Activated CD4-positive, alpha-beta T cell treated with anti-CD3 and anti-CD28 coated beads for 36 hours (primary cell): ENCODE measurements at regions of chr1 and their contacts with region 1.

Region 1: GRCh38 chr1:89198491-89199072 is at the start of gene GBP4:
- DNase-seq: peak; percentile 63
- ATAC-seq: peak; percentile 67
- H3K4me3 Mint-ChIP-seq: peak within 1 kb of the TSS; percentile 83
- H3K27ac Mint-ChIP-seq: peak within 1 kb of the TSS; percentile 98
- H3K4me1 Mint-ChIP-seq: peaks cover 73% of the 10 kb centered on the region
- H3K27me3 Mint-ChIP-seq: no peaks in the 10 kb centered on the region
- total RNA-seq, gene GBP4: 30.8 to 34.4 TPM

Region 2: DNA sequence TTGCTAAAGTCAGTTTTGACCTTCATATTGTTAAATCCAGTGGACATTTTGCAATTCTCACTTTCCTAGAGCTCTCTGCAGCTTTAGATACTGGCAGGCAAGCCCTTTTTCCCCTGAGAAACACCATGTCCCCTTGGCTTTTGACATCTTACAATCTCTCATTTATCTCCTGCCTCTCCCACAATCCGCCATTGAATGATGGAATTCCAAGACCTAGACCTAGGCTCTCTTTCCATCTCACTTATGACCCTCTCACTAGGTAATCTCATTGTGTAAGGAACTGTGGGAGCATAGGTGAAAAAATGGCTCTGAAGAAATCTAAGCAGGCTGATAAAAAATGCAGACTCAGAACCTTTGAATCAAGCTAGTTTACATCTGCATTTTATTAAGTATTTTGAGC is 208.2 kb before region 1 on chr1:
- CTCF ChIA-PET with region 1: no interaction called
- POLR2A ChIA-PET with region 1: no interaction called
- intact Hi-C with region 1: loop called in 1 of 2 experiments (anchors 1 kb)
- DNase-seq: no peak
- ATAC-seq: no peak
- H3K4me3 Mint-ChIP-seq: peak overlapping the region; percentile 41
- H3K27ac Mint-ChIP-seq: peak overlapping the region; percentile 48
- H3K4me1 Mint-ChIP-seq: peaks cover 50% of the 10 kb centered on the region
- H3K27me3 Mint-ChIP-seq: no peaks in the 10 kb centered on the region

Region 3: DNA sequence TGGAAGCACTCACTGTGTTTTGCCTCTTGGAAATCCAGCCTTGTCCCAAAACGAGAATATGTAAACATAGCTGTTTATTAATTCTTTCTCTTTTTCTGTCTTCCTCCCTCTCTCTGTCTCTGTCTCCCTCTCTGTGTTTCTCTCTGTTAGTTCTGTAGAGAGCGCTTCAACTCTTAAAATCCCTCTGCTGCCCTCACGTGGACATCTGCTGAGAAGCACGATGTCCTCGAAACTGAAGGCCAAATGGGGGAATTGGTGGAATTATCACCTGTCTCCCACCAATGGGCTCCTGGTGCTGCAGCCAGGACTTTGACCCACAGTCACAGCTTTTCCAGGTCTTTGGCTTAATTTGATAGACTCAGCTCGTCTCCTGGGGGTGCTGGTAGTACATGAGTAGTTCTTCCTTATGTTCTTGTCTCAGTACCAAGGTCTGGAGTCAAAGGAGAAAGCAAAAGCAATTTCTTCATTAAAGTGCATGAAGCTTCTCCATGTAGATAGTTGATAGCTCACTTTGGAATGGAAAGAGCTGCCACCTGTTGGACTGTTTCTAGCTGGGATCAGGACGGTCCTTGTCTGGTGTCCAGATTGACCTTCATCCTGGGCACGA is 159.8 kb after region 1 on chr1:
- CTCF ChIA-PET with region 1: interaction called, 5 read pairs
- POLR2A ChIA-PET with region 1: interaction called, 3 read pairs
- intact Hi-C with region 1: loop called (anchors 1 to 2 kb)
- DNase-seq: peak; percentile 90
- ATAC-seq: peak; percentile 73
- H3K4me3 Mint-ChIP-seq: peak overlapping the region; percentile 55
- H3K27ac Mint-ChIP-seq: peak overlapping the region; percentile 84
- H3K4me1 Mint-ChIP-seq: peaks cover 46% of the 10 kb centered on the region
- H3K27me3 Mint-ChIP-seq: no peaks in the 10 kb centered on the region